Right ventricle myocardium inferior (tissue), 1 donor: ENCODE measurements at regions of chr10 and their contacts with region 1.

Region 1: DNA sequence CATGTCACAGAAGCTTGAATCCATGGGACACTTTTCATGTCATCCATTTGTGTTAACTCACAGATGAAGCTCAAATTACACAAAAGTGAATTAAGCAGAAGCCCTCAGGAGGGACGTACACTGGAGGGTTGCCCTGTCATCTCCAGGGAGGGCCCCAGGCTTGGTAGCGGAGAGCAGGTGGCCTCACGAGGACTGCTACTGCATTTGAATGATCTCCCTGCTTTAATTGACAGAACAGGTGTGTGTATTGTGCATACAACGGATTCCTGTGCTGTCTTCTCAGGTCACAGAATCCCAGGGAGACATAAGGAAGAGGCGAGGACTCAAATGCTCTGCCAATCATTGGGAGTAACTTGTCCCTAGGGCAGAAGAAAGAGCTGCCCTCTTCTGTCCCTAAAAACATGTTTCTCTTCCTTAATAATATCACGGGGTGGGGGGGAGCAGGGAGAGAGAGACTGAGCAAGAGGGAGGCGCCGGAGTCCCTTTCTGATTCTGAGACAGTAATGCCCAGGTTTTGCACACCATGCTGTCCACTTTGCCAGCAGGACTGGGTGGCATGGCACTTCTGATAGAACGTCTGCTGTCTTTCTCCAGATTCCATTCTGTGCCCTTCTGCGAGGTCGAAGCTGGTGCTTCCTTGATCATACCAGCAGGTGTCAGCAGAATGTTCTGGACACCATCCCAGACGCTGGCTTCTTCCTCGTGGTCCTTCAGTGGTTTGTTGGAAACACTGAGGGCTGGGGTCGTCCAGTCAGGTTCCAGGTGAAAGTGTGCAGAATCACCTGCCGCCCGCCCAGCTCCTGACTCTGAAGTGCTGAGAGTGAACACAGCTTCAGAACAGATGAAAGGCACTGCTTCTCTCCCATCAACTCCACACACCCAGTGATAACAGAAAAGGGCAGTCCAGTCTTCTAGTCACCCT is 26.2 kb upstream of the RASGEF1A start:
- DNase-seq: no peak
- ATAC-seq: peak; percentile 59

Region 2: GRCh38 chr10:43348511-43349312 is 55.7 kb after region 1 on chr10:
- intact Hi-C with region 1: loop called (anchors 1 kb)
- DNase-seq: peak; percentile 86
- ATAC-seq: peak; percentile 98

Region 3: GRCh38 chr10:43461950-43462349 is 168.9 kb after region 1 on chr10:
- intact Hi-C with region 1: loop called (anchors 1 kb)
- DNase-seq: no peak
- ATAC-seq: no peak

Region 4: DNA sequence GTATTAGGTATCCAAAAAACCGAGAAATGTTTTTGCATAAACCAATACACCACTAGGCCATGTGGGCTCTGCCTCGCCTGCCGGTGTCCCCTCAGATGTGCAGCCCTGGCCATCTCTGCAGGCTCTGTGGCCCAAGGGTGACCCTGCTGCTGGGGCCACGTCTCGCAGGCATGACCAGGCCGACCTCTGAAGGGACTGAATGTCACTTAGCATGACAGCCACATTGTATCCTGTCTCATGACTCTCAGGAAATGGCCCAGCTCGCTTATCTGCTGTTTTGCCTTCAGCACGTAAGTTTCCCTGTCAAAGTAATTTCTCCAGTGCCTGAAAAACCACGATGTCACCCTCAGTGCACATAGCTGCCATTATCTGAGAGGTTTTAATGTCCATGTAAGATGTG is 405.1 kb after region 1 on chr10:
- intact Hi-C with region 1: no loop called
- DNase-seq: no peak
- ATAC-seq: peak; percentile 64